Heart left ventricle (tissue), 16 donors: ENCODE measurements at regions of chr2 and their contacts with region 1.

Region 1: GRCh38 chr2:85243101-85244072 is 84.4 kb downstream of the TGOLN2 start:
- DNase-seq: peak in 4 of 5 donors; percentile 56 to 79 (median 70)
- ATAC-seq: peak in 3 of 4 donors; percentile 46 to 75 (median 57)
- H3K4me3 ChIP-seq: no peak overlapping the region
- H3K27ac ChIP-seq: no peak overlapping the region
- H3K4me1 ChIP-seq: peaks cover 3 to 77% (median 60%) of the 10 kb centered on the region in 12 donors
- H3K27me3 ChIP-seq: no peaks in the 10 kb centered on the region
- CTCF ChIP-seq: peak; percentile 40 to 73 (median 54)
- POLR2A ChIP-seq: no peak

Region 2: GRCh38 chr2:85181134-85181631 is 62.2 kb before region 1 on chr2:
- intact Hi-C with region 1: loop called in 2 of 10 experiments (anchors 5 to 10 kb)
- DNase-seq: no peak
- ATAC-seq: peak in 1 of 4 donors; percentile 33
- H3K4me3 ChIP-seq: no peak overlapping the region
- H3K27ac ChIP-seq: no peak overlapping the region
- H3K4me1 ChIP-seq: peaks cover 2 to 53% (median 44%) of the 10 kb centered on the region in 12 donors
- H3K27me3 ChIP-seq: no peaks in the 10 kb centered on the region
- CTCF ChIP-seq: peak in 3 of 12 donors; percentile 20 to 31 (median 26)
- POLR2A ChIP-seq: no peak

Region 3: GRCh38 chr2:85282914-85283313 is 39.5 kb after region 1 on chr2:
- intact Hi-C with region 1: loop called in 1 of 10 experiments (anchors 5 kb)
- DNase-seq: no peak
- ATAC-seq: no peak
- H3K4me3 ChIP-seq: no peak overlapping the region
- H3K27ac ChIP-seq: no peak overlapping the region
- H3K4me1 ChIP-seq: peaks cover 0 to 24% (median 16%) of the 10 kb centered on the region in 12 donors
- H3K27me3 ChIP-seq: no peaks in the 10 kb centered on the region
- CTCF ChIP-seq: no peak
- POLR2A ChIP-seq: no peak

Region 4: DNA sequence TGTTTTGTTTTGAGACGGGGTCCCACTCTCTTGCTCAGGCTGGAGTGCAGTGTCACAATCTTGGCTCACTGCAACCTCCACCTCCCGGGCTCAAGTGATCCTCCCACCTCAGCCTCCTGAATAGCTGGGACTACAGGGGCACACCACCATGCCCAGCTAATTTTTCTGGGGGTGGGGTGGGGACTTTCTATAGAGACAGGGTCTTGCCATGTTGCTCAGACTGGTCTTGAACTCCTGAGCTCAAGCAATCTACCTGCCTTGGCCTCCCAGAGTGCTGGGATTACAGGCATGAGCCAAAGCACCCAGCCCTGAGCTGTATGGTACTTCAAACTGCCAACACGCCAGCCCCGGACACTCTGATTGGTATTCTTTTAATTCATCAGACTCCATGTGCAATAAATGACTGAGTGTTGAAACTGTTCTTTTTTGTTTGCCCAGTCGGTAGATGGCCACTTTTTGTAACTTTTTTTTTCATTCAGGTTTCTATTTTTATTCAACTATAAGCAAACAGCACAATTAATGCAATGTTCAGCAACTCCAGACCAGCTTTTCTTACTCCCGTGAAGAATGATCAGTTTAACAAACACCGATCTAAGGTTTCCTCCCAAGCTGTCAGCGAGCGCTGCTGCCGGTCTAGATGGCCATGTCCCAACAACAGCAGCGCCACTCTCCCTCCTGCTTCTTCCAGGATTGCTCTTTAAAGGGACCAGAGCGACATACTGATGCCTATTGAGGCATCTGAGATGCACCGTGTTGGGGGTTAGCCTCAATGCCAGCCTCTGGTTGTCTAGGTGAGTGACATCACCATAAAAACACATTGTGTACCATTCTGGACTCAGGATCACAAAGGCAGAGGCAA is 96.9 kb after region 1 on chr2:
- intact Hi-C with region 1: no loop called
- DNase-seq: no peak
- ATAC-seq: peak in 2 of 4 donors; percentile 21 to 40
- H3K4me3 ChIP-seq: no peak overlapping the region
- H3K27ac ChIP-seq: no peak overlapping the region
- H3K4me1 ChIP-seq: peaks cover 0 to 5% (median 0%) of the 10 kb centered on the region in 12 donors
- H3K27me3 ChIP-seq: no peaks in the 10 kb centered on the region
- CTCF ChIP-seq: no peak
- POLR2A ChIP-seq: no peak